Heart left ventricle (tissue), 16 donors: ENCODE measurements at regions of chr13 and their contacts with region 1.

Region 1: GRCh38 chr13:59391696-59392095 is 772.0 kb downstream of the DIAPH3 start:
- DNase-seq: peak in 4 of 5 donors; percentile 37 to 78 (median 56)
- ATAC-seq: peak; percentile 55 to 85 (median 82)
- H3K4me3 ChIP-seq: no peak overlapping the region
- H3K27ac ChIP-seq: peak overlapping the region in 6 of 12 donors; percentile 3 to 71 (median 20)
- H3K4me1 ChIP-seq: peaks cover 0 to 12% (median 2%) of the 10 kb centered on the region in 12 donors
- H3K27me3 ChIP-seq: no peaks in the 10 kb centered on the region
- CTCF ChIP-seq: peak; percentile 83 to 95 (median 87)
- POLR2A ChIP-seq: no peak

Region 2: GRCh38 chr13:59477011-59477410 is 85.3 kb after region 1 on chr13:
- intact Hi-C with region 1: loop called in 3 of 10 experiments (anchors 10 kb)
- DNase-seq: no peak
- ATAC-seq: peak in 1 of 4 donors; percentile 26
- H3K4me3 ChIP-seq: no peak overlapping the region
- H3K27ac ChIP-seq: peak overlapping the region in 6 of 12 donors; percentile 12 to 48 (median 33)
- H3K4me1 ChIP-seq: peaks cover 0 to 54% (median 17%) of the 10 kb centered on the region in 12 donors
- H3K27me3 ChIP-seq: no peaks in the 10 kb centered on the region
- CTCF ChIP-seq: peak in 10 of 12 donors; percentile 21 to 51 (median 34)
- POLR2A ChIP-seq: no peak

Region 3: DNA sequence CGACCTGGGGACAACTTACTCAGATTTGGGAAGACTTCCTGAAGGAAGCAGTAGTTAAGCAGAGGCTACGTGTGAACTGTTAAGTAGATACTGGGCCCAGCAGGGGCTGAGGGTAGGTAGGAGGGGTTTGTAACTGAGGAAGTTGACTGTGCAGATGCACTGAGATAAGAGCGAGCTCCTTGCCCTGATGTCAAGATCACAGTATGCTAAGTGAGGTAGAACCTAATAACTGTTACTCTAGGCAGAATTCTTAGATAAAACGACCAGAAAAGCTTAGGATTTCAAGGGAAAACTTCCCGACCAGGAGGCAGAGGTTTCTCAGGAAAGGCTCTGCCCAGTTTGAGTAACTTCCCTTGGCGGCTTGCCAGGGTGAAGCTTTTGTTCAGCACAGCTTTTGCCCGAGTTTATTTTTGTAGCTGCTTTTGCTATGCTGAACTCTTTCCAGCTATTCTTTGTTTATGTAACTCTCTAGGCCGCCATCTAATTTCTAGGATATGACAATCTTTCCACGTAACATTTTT is 139.9 kb after region 1 on chr13:
- intact Hi-C with region 1: loop called in 1 of 10 experiments (anchors 10 kb)
- DNase-seq: peak; percentile 87 to 93 (median 90)
- ATAC-seq: peak; percentile 78 to 94 (median 90)
- H3K4me3 ChIP-seq: no peak overlapping the region
- H3K27ac ChIP-seq: peak overlapping the region in 11 of 12 donors; percentile 19 to 72 (median 48)
- H3K4me1 ChIP-seq: peaks cover 3 to 41% (median 23%) of the 10 kb centered on the region in 12 donors
- H3K27me3 ChIP-seq: no peaks in the 10 kb centered on the region
- CTCF ChIP-seq: no peak
- POLR2A ChIP-seq: no peak

Region 4: DNA sequence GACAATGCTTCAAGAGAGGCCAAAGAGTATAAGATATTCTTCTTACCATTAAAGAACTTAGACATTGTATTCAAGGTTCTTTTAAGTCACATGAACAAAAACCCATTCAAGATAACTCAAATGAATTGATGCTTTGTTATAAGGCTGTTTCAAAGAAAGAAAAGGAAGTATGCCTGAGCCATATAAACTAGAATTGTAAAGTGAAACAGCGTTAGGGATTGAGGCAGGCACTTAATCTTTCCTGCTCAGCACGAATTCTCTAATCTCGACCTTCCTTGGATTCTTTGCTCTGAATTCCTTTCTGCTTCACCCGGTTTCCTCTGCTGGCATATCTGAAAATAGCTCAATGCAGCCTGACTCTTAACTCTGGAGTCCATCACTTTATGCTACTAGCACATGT is 176.6 kb after region 1 on chr13:
- intact Hi-C with region 1: no loop called
- DNase-seq: no peak
- ATAC-seq: no peak
- H3K4me3 ChIP-seq: no peak overlapping the region
- H3K27ac ChIP-seq: no peak overlapping the region
- H3K4me1 ChIP-seq: no peaks in the 10 kb centered on the region
- H3K27me3 ChIP-seq: no peaks in the 10 kb centered on the region
- CTCF ChIP-seq: no peak
- POLR2A ChIP-seq: no peak

Region 5: DNA sequence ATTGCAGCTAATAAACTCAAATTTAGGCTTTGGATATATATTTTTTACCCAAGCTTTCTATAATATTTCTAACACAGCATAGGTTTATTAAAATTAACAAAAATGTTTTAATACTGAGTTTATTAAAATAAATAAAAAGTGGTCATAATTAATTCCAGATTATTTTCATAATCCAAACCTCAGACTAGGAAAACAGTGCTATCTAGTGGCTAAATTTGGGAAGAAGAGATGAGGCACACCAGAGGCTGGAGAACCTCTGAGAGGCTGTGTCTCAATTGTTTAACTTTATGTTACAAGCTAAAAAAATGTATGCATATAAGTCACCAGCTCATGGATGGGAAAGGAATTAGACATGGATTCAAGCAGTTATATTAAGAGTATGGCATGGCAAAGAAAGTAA is 379.6 kb after region 1 on chr13:
- intact Hi-C with region 1: loop called in 6 of 10 experiments (anchors 2 to 10 kb)
- DNase-seq: no peak
- ATAC-seq: no peak
- H3K4me3 ChIP-seq: no peak overlapping the region
- H3K27ac ChIP-seq: no peak overlapping the region
- H3K4me1 ChIP-seq: no peaks in the 10 kb centered on the region
- H3K27me3 ChIP-seq: no peaks in the 10 kb centered on the region
- CTCF ChIP-seq: peak in 11 of 12 donors; percentile 33 to 71 (median 54)
- POLR2A ChIP-seq: no peak

Region 6: GRCh38 chr13:60431108-60431700 is 1039.5 kb after region 1 on chr13:
- intact Hi-C with region 1: loop called in 1 of 10 experiments (anchors 10 kb)
- DNase-seq: no peak
- ATAC-seq: peak in 3 of 4 donors; percentile 66 to 81 (median 77)
- H3K4me3 ChIP-seq: no peak overlapping the region
- H3K27ac ChIP-seq: no peak overlapping the region
- H3K4me1 ChIP-seq: no peaks in the 10 kb centered on the region
- H3K27me3 ChIP-seq: no peaks in the 10 kb centered on the region
- CTCF ChIP-seq: peak; percentile 88 to 97 (median 93)
- POLR2A ChIP-seq: no peak